PC-9 (cell line): ENCODE measurements at regions of chr10 and their contacts with region 1.

Region 1: GRCh38 chr10:43361986-43362839 is 9.2 kb upstream of the FXYD4 start:
- DNase-seq: peak; percentile 95 to 100
- H3K4me3 ChIP-seq: peak overlapping the region; percentile 70
- H3K27ac ChIP-seq: peak overlapping the region; percentile 44
- H3K4me1 ChIP-seq: peaks cover 10% of the 10 kb centered on the region; the same call in 1 of the 2 replicates
- H3K27me3 ChIP-seq: no peaks in the 10 kb centered on the region
- CTCF ChIP-seq: peak; percentile 60; the same call in 1 of the 2 replicates

Region 2: GRCh38 chr10:43374194-43374593 is 12.0 kb after region 1 on chr10:
- CTCF ChIA-PET with region 1: interaction called, 13 read pairs
- POLR2A ChIA-PET with region 1: no interaction called
- intact Hi-C with region 1: no loop called
- DNase-seq: no peak
- H3K4me3 ChIP-seq: no peak overlapping the region
- H3K27ac ChIP-seq: no peak overlapping the region
- H3K4me1 ChIP-seq: peaks cover 8% of the 10 kb centered on the region
- H3K27me3 ChIP-seq: no peaks in the 10 kb centered on the region
- CTCF ChIP-seq: no peak

Region 3: GRCh38 chr10:44195112-44196007 is 833.1 kb after region 1 on chr10:
- CTCF ChIA-PET with region 1: no interaction called
- POLR2A ChIA-PET with region 1: no interaction called
- intact Hi-C with region 1: no loop called
- DNase-seq: no peak
- H3K4me3 ChIP-seq: no peak overlapping the region
- H3K27ac ChIP-seq: no peak overlapping the region
- H3K4me1 ChIP-seq: no peaks in the 10 kb centered on the region
- H3K27me3 ChIP-seq: peaks cover 15% of the 10 kb centered on the region
- CTCF ChIP-seq: no peak